MCF 10A (cell line): ENCODE measurements at regions of chr5 and their contacts with region 1.

Region 1: DNA sequence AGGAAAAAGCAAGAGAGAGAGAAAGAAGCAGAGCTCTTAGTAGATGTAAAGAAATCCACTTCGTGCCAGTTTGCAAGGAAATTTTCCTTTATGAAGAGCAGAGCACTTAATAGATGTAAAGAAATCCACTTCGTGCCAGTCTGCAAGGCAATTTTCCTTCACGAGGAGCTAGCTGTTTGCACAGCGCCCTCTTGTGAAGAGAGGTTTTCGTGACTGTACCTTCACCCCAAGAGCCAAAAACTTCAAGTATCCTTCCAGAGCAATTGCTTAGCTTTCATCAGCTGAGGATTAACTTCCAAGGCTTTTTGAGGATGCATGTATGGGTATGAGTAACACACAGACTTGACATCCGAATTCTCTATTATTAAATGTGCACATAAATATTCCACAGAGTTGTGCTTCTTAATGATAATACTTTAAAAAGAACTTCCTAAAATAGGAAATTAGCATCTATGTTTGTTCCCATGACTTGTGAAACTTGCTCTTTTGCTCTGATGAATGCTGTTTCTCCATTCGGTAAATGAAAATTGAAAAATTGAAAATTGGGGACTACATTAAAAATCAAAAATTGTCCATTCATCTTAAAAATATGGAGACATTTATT is 525.6 kb downstream of the PDE4D start:
- DNase-seq: peak; percentile 77
- H3K4me3 Mint-ChIP-seq: no peak overlapping the region
- H3K27ac Mint-ChIP-seq: no peak overlapping the region
- H3K4me1 Mint-ChIP-seq: no peaks in the 10 kb centered on the region
- H3K27me3 Mint-ChIP-seq: no peaks in the 10 kb centered on the region
- CTCF ChIP-seq: peak; percentile 87

Region 2: GRCh38 chr5:59209758-59210359 is 158.0 kb before region 1 on chr5:
- CTCF ChIA-PET with region 1: interaction called, 28 read pairs
- POLR2A ChIA-PET with region 1: no interaction called
- intact Hi-C with region 1: no loop called
- DNase-seq: peak; percentile 70
- H3K4me3 Mint-ChIP-seq: no peak overlapping the region
- H3K27ac Mint-ChIP-seq: peak overlapping the region; percentile 82
- H3K4me1 Mint-ChIP-seq: peaks cover 39% of the 10 kb centered on the region
- H3K27me3 Mint-ChIP-seq: no peaks in the 10 kb centered on the region
- CTCF ChIP-seq: no peak

Region 3: GRCh38 chr5:59218424-59219045 is 149.4 kb before region 1 on chr5:
- CTCF ChIA-PET with region 1: interaction called, 27 read pairs
- POLR2A ChIA-PET with region 1: interaction called, 3 read pairs
- intact Hi-C with region 1: loop called (anchors 1 kb)
- DNase-seq: peak; percentile 11
- H3K4me3 Mint-ChIP-seq: no peak overlapping the region
- H3K27ac Mint-ChIP-seq: no peak overlapping the region
- H3K4me1 Mint-ChIP-seq: peaks cover 22% of the 10 kb centered on the region
- H3K27me3 Mint-ChIP-seq: no peaks in the 10 kb centered on the region
- CTCF ChIP-seq: peak; percentile 39

Region 4: GRCh38 chr5:59325070-59325469 is 42.8 kb before region 1 on chr5:
- CTCF ChIA-PET with region 1: no interaction called
- POLR2A ChIA-PET with region 1: no interaction called
- intact Hi-C with region 1: no loop called
- DNase-seq: no peak
- H3K4me3 Mint-ChIP-seq: no peak overlapping the region
- H3K27ac Mint-ChIP-seq: no peak overlapping the region
- H3K4me1 Mint-ChIP-seq: peaks cover 14% of the 10 kb centered on the region
- H3K27me3 Mint-ChIP-seq: no peaks in the 10 kb centered on the region
- CTCF ChIP-seq: no peak

Region 5: DNA sequence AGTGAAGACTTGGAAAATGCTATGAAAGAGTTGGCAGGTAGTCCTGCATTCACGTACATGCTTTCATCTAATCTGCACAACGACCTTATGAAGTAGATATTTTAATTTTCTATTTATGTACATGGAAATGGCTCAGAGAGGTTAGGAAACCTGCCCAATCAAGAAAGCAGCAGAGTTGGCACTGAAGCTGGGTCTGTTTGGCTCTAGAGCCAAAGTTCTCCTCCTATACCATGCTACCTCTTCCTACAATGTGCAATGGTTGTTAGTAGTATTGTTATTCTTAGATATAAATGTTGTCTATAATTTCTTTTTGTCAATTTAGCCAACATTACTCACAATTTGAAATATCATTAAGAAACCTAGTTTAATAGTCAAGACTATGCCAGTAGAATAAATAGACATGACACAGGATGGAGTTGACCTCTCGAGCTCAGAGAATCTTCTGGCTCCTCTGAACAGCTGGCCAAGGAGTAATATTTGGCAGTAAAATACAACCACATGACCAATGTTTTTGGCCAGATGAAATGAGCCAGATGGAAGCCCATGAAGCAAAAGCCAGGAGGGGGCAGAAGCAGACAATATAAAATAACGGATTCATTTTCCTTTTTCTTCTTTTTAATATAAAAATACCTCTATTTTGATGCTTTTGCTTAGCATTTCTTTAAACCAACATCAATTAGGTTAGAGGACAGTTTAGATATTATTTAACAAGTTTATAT is 16.7 kb before region 1 on chr5:
- CTCF ChIA-PET with region 1: interaction called, 28 read pairs
- POLR2A ChIA-PET with region 1: interaction called, 4 read pairs
- intact Hi-C with region 1: no loop called
- DNase-seq: peak; percentile 4
- H3K4me3 Mint-ChIP-seq: no peak overlapping the region
- H3K27ac Mint-ChIP-seq: no peak overlapping the region
- H3K4me1 Mint-ChIP-seq: no peaks in the 10 kb centered on the region
- H3K27me3 Mint-ChIP-seq: no peaks in the 10 kb centered on the region
- CTCF ChIP-seq: no peak